Posterior vena cava (tissue), 2 donors: ENCODE measurements at regions of chrX and their contacts with region 1.

Region 1: GRCh38 chrX:72029483-72030411 is 102.0 kb downstream of the RTL5 start:
- DNase-seq: peak; percentile 74

Region 2: GRCh38 chrX:72121383-72121782 is 91.6 kb after region 1 on chrX:
- intact Hi-C with region 1: loop called (anchors 5 to 10 kb)
- DNase-seq: peak; percentile 90